Mammary epithelial cell (primary cell): ENCODE measurements at regions of chr15 and their contacts with region 1.

Region 1: DNA sequence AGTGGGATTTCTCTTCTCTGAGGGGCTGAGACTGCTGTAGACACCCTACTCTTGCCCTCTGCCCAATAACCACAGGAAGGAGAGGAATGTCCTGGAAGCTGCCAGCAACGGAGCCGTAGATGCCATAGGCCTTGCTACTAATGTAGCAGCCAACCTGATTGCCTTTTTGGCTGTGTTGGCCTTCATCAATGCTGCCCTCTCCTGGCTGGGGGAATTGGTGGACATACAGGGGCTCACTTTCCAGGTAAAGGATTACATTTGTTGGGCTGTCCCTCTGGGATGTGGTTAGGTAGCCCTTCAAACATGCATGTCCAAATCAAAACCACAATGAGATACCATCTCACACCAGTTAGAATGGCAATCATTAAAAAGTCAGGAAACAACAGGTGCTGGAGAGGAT is 16.1 kb downstream of the SLC28A2 start:
- DNase-seq: peak; percentile 52
- H3K4me3 ChIP-seq: no peak overlapping the region
- H3K27ac ChIP-seq: no peak overlapping the region
- H3K4me1 ChIP-seq: no peaks in the 10 kb centered on the region
- H3K27me3 ChIP-seq: no peaks in the 10 kb centered on the region
- CTCF ChIP-seq: peak; percentile 35 to 50

Region 2: GRCh38 chr15:44706946-44707636 is 561.0 kb before region 1 on chr15:
- CTCF ChIA-PET with region 1: no interaction called
- dilution Hi-C with region 1: no loop called
- in situ Hi-C with region 1: no loop called
- intact Hi-C with region 1: no loop called
- DNase-seq: peak; percentile 80
- H3K4me3 ChIP-seq: no peak overlapping the region
- H3K27ac ChIP-seq: no peak overlapping the region
- H3K4me1 ChIP-seq: peaks cover 13% of the 10 kb centered on the region
- H3K27me3 ChIP-seq: no peaks in the 10 kb centered on the region
- CTCF ChIP-seq: no peak

Region 3: GRCh38 chr15:45166834-45167630 is 101.1 kb before region 1 on chr15:
- CTCF ChIA-PET with region 1: no interaction called
- dilution Hi-C with region 1: no loop called
- in situ Hi-C with region 1: no loop called
- intact Hi-C with region 1: loop called (anchors 1 kb)
- DNase-seq: peak; percentile 44
- H3K4me3 ChIP-seq: peak overlapping the region; percentile 50 to 58 (median 54)
- H3K27ac ChIP-seq: peak overlapping the region; percentile 35
- H3K4me1 ChIP-seq: peaks cover 22% of the 10 kb centered on the region
- H3K27me3 ChIP-seq: no peaks in the 10 kb centered on the region
- CTCF ChIP-seq: peak; percentile 42 to 65

Region 4: DNA sequence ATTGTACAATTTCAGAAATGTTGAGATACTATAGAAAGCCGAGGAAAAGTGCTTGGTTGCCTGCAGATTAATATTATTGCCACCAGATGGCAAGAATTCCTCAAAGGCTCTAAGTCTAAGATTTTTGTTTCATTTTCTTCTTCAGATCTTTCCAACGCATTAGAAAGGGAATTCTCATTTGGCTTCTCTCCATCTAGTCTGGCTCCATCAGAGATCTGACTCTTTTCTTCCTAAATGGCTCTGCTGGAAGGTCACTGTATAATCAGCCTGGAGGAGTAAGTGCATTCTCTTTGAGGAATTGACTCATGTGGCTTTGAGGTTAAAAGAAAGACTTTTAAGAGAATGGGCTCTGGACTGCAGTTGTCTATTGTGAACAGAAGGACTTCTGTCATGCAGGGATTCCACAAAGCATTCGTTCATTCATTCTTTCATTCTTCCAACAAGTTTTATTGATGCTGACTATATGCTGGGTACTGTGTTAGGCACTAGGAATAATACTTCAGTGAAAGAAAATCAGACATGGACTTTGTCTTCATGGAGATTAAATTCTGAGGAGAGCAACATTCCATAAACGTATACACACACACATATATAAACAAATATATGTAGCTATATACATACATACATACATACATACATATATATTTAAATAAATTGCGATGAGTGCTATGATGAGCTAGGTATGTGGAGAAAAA is 39.2 kb after region 1 on chr15:
- CTCF ChIA-PET with region 1: no interaction called
- dilution Hi-C with region 1: no loop called
- in situ Hi-C with region 1: no loop called
- intact Hi-C with region 1: no loop called
- DNase-seq: peak; percentile 40
- H3K4me3 ChIP-seq: peak overlapping the region in 1 of 3 experiments; percentile 19
- H3K27ac ChIP-seq: no peak overlapping the region
- H3K4me1 ChIP-seq: no peaks in the 10 kb centered on the region
- H3K27me3 ChIP-seq: no peaks in the 10 kb centered on the region
- CTCF ChIP-seq: peak; percentile 30 to 53